ENCODE measurements at regions of chr10 and their contacts with region 1.

Region 1: GRCh38 chr10:124741281-124741921 is 2.8 kb downstream of the FAM53B start:
- DNase-seq: peak in 1 of 2 donors; percentile 88
- H3K4me3 ChIP-seq: peak overlapping the region; percentile 13 to 87
- H3K27ac ChIP-seq: peak overlapping the region; percentile 90
- H3K4me1 ChIP-seq: peaks cover 85% of the 10 kb centered on the region
- H3K27me3 ChIP-seq: no peaks in the 10 kb centered on the region
- CTCF ChIP-seq: peak; percentile 64 to 98 (median 73)
- POLR2A ChIP-seq: no peak

Region 2: GRCh38 chr10:124535731-124536495 is 205.5 kb before region 1 on chr10:
- intact Hi-C with region 1: loop called (anchors 2 kb)
- DNase-seq: no peak
- H3K4me3 ChIP-seq: no peak overlapping the region
- H3K27ac ChIP-seq: peak overlapping the region; percentile 3
- H3K4me1 ChIP-seq: peaks cover 11% of the 10 kb centered on the region
- H3K27me3 ChIP-seq: no peaks in the 10 kb centered on the region
- CTCF ChIP-seq: no peak
- POLR2A ChIP-seq: no peak

Region 3: GRCh38 chr10:124619802-124620490 is 121.5 kb before region 1 on chr10:
- intact Hi-C with region 1: loop called (anchors 5 kb)
- DNase-seq: no peak
- H3K4me3 ChIP-seq: no peak overlapping the region
- H3K27ac ChIP-seq: no peak overlapping the region
- H3K4me1 ChIP-seq: peaks cover 47% of the 10 kb centered on the region
- H3K27me3 ChIP-seq: no peaks in the 10 kb centered on the region
- CTCF ChIP-seq: no peak
- POLR2A ChIP-seq: no peak

Region 4: GRCh38 chr10:124701435-124701834 is 40.0 kb before region 1 on chr10:
- intact Hi-C with region 1: loop called (anchors 5 kb)
- DNase-seq: no peak
- H3K4me3 ChIP-seq: no peak overlapping the region
- H3K27ac ChIP-seq: peak overlapping the region; percentile 81
- H3K4me1 ChIP-seq: peaks cover 98% of the 10 kb centered on the region
- H3K27me3 ChIP-seq: no peaks in the 10 kb centered on the region
- CTCF ChIP-seq: no peak
- POLR2A ChIP-seq: no peak